Calu3 (cell line): ENCODE measurements at regions of chr1 and their contacts with region 1.

Region 1: DNA sequence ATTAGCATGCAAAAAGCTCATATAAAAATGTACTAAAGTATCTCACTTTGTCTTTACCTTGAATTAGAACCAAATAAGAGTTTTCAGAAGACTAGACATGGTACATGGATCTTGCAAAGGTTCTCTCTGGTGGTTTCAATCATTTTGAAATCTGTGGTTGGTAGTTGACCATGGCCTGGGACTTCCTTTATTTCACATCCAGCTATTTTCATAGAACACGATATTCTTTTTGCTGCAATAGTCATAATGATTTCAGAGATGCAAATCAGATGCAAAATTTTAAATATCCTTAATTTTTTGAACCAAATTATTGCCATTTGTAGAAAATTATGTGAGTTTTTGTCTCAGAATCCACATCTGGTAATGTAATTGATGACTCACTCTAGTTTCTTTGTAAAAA is 375.1 kb upstream of the ZP4 start:
- DNase-seq: no peak
- H3K4me3 Mint-ChIP-seq: no peak overlapping the region
- H3K27ac Mint-ChIP-seq: no peak overlapping the region
- H3K4me1 Mint-ChIP-seq: no peaks in the 10 kb centered on the region
- H3K27me3 Mint-ChIP-seq: no peaks in the 10 kb centered on the region
- CTCF ChIP-seq: no peak

Region 2: DNA sequence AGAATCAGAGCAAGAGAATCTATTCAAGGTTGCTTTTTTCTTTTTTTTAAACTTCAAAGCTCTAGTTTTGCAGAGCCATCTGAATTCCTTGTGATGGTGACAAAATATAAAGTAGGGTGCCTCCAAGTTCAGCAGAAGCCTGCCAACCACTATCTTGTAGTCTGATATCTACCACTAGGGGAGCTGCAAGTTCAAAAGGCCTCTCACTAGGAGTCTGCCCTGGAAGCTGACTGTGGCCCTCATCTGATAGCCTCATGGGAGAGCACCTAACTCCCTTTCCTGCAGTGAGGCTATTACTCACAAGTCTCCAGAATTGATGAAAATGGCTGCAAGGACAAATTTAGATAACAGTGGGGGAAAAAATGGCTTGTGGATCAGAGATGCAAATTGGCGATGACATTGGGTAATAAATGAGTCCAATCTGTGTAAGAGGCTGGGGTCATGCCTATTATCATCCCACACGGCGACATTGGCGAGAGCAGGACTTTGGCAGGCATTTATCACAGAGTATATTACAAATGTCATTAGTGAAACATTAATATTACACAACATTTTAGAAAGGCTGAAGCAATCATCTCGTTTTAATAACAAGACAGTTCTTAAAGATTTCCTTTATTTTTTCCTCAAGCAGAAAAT is 364.4 kb before region 1 on chr1:
- CTCF ChIA-PET with region 1: interaction called, 11 read pairs
- intact Hi-C with region 1: no loop called
- DNase-seq: peak; percentile 45
- H3K4me3 Mint-ChIP-seq: no peak overlapping the region
- H3K27ac Mint-ChIP-seq: peak overlapping the region; percentile 4
- H3K4me1 Mint-ChIP-seq: peaks cover 8% of the 10 kb centered on the region
- H3K27me3 Mint-ChIP-seq: no peaks in the 10 kb centered on the region
- CTCF ChIP-seq: peak; percentile 63